Activated B cell treated with CpG ODN at 0.5 μM for 24 hours (primary cell): ENCODE measurements at regions of chr19 and their contacts with region 1.

Region 1: GRCh38 chr19:16446724-16447368 is 24.9 kb downstream of the EPS15L1 start:
- DNase-seq: peak; percentile 52
- ATAC-seq: peak; percentile 43
- H3K4me3 Mint-ChIP-seq: peak overlapping the region; percentile 64
- H3K27ac Mint-ChIP-seq: peak overlapping the region; percentile 95
- H3K4me1 Mint-ChIP-seq: peaks cover 94% of the 10 kb centered on the region
- H3K27me3 Mint-ChIP-seq: no peaks in the 10 kb centered on the region
- CTCF ChIP-seq: no peak

Region 2: DNA sequence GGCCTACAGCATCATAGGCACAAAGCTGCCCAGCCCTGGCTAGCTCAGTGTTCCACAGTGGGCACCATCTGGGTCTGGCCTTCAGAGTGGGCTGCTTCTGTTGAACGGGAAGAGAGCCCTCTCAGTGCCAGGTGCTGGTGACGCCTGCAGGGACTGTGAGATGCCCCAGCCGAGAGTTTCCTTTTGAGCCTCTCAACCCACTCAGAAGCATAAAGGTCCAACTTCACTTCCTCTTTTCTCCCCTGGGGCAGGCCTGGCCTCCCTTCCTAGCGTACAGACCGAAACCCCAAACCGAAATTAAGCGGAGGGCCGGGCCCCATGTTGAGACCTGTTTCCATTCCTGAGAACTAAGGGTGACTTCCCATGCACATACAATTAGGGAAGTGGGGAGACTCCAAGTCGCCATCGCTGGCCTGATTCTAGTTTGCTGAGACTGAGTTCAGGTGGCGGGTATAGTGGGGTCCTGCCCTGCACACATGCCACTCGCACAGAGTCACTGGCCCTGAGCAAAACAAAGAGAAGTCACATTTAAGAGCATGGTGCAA is 328.3 kb before region 1 on chr19:
- CTCF ChIA-PET with region 1: no interaction called
- POLR2A ChIA-PET with region 1: no interaction called
- intact Hi-C with region 1: loop called (anchors 2 kb)
- DNase-seq: peak; percentile 76
- ATAC-seq: peak; percentile 87
- H3K4me3 Mint-ChIP-seq: peak overlapping the region; percentile 73
- H3K27ac Mint-ChIP-seq: peak overlapping the region; percentile 98
- H3K4me1 Mint-ChIP-seq: peaks cover 80% of the 10 kb centered on the region
- H3K27me3 Mint-ChIP-seq: no peaks in the 10 kb centered on the region
- CTCF ChIP-seq: no peak

Region 3: DNA sequence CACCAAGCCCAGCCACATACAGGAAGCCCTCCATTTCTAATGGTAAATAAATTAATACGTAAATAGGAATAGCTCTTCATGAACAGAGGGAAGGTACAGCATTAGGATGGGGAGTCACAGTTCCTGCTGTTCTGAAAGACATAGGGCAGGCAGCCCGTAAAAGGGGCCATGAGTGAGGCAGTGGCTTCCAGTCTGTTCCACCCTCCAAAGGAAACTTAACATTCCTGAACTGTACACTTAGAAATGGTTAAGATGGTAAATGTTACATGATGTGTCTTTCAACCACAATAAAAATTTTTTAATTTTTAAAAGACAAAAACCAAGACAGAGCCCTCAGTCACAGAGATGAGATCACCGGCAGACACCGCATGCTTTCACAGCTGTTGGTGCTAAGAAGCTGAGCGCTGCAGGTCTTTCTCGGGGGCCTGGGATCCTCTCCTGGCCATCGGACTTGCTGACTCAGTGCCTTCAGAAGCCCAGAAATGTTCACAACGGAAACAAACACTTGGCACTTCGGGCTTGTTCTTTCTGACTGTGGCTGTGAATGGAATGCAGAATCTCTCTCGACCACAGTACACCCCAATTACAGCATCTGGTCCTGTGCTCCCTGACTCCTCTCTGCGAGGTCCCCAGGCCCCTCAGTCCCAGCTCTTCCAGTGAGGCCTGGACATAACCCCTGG is 11.5 kb before region 1 on chr19:
- CTCF ChIA-PET with region 1: no interaction called
- POLR2A ChIA-PET with region 1: interaction called, 15 read pairs
- intact Hi-C with region 1: loop called (anchors 1 kb)
- DNase-seq: no peak
- ATAC-seq: no peak
- H3K4me3 Mint-ChIP-seq: no peak overlapping the region
- H3K27ac Mint-ChIP-seq: peak overlapping the region; percentile 70
- H3K4me1 Mint-ChIP-seq: peaks cover 35% of the 10 kb centered on the region
- H3K27me3 Mint-ChIP-seq: no peaks in the 10 kb centered on the region
- CTCF ChIP-seq: no peak

Region 4: DNA sequence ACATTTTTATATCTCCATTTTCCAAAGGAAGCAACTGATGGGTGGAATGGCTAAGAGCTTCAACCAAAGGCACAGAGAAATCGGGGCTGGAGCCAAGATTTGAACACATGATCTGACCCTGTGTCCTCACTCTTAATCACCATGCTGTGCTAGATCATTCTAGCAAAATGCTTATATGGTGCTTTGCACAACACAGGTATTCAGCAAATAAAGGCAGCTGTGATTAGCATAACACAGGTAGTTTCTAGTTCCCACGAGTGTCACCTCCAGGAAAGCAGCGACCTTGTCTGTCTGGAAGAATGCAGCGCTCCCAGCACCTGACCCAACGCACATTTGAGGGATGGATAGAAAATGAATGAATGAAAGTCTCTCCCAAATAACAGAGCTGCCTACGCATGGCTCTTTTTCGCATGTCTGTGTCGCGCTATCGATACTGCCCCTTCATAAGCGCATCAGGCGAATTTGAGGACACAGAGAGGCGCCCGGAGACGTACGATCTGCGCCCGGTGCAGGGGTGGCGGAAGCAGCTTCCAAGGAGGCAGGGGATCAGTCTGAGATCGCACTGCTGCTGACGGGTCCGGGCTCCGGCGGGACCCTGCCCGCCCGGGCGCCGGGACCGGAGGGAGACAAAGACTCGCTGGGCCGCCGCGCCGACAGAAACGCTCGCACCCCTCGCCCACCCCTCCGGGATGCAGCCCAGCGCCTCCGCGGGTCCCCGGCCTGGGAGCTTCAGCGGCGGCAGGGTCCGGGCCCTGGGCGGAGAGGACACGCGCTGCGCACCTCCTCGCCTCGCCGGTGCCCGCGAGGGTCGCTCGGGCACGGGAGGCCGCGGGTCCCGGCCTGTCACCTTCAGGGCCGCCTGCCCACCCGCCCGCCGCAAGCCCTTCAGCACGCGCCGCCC is 24.3 kb after region 1 on chr19:
- CTCF ChIA-PET with region 1: interaction called, 3 read pairs
- POLR2A ChIA-PET with region 1: interaction called, 11 read pairs
- intact Hi-C with region 1: loop called (anchors 1 kb)
- DNase-seq: peak; percentile 37
- ATAC-seq: peak; percentile 2
- H3K4me3 Mint-ChIP-seq: peak overlapping the region; percentile 86
- H3K27ac Mint-ChIP-seq: peak overlapping the region; percentile 7
- H3K4me1 Mint-ChIP-seq: peaks cover 43% of the 10 kb centered on the region
- H3K27me3 Mint-ChIP-seq: no peaks in the 10 kb centered on the region
- CTCF ChIP-seq: no peak

Region 5: DNA sequence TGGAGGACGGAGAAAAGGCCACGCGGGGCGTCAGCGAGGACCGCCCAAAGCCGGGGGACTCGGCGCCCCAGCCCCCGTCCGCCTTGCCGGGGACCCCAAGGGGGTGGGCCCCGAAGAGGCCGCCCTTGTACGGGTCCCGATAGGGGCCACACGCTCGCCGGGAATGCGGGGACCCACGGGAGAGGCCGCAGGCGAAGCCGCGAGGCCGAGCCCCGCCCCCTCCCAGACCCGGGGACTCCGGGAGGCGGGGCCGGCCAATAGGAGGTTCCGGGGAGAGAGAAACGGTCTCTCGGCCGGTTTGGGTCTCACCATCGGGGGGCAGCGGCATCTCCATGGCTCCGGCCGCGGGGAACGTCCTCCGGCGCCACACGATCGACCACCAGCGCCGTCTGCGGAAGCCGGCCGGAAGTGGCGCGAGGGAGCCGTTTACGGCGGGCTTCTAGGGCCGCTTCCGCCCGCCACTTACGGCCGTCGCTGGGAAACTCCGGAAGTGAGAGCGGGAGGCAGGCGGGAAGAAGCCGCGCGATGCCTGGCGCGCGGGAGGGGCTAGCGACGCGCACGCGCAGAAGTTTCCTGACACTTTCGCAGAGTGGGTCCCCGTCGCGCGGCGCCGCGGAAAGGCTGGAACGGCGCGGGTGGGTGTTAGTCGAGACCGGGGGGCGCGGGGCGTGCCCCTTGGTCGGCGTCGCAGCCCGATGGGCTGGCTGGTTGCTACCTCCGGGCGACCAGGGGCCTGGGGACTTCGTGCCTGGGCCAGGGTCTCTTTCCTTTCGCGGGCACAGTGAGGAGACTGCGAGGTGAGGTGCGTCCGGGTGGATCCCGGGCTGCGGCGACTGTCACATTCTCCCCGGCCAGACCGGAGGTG is 95.4 kb after region 1 on chr19 and contains the start of gene CHERP:
- CTCF ChIA-PET with region 1: no interaction called
- POLR2A ChIA-PET with region 1: interaction called, 3 read pairs
- intact Hi-C with region 1: loop called (anchors 2 kb)
- DNase-seq: peak; percentile 93
- ATAC-seq: peak; percentile 82
- H3K4me3 Mint-ChIP-seq: peak within 1 kb of the TSS; percentile 86
- H3K27ac Mint-ChIP-seq: peak within 1 kb of the TSS; percentile 76
- H3K4me1 Mint-ChIP-seq: peaks cover 61% of the 10 kb centered on the region
- H3K27me3 Mint-ChIP-seq: no peaks in the 10 kb centered on the region
- CTCF ChIP-seq: no peak
- total RNA-seq, gene CHERP: 70.9 and 89.3 TPM in 2 replicates